Heart right ventricle (tissue), 16 donors: ENCODE measurements at regions of chr17 and their contacts with region 1.

Region 1: DNA sequence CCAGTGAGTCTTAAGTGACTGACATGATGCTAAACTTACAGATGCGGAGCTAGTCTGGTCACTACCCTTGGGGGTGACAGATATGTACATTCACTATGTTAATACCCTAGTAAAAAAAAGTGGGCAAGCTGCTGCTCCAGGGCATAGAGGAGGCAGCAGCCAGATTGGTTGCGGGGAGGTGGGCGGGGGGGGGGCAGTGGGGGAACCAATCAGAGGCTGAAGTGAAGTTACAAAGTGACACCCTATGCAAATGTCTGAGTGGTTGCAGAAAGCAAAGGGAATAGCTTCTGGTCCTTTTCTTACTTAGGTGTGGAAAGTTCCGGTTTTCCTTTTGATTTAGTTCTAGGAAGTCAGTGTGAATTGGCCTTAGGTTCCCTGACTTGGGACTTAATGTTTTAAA is 12.1 kb downstream of the NDEL1 start:
- DNase-seq: no peak
- ATAC-seq: peak in 6 of 8 donors; percentile 19 to 54 (median 44)
- H3K4me3 ChIP-seq: no peak overlapping the region
- H3K27ac ChIP-seq: peak overlapping the region in 5 of 10 donors; percentile 1 to 59 (median 8)
- H3K4me1 ChIP-seq: peaks cover 0 to 58% (median 43%) of the 10 kb centered on the region in 9 donors
- H3K27me3 ChIP-seq: no peaks in the 10 kb centered on the region
- CTCF ChIP-seq: no peak

Region 2: DNA sequence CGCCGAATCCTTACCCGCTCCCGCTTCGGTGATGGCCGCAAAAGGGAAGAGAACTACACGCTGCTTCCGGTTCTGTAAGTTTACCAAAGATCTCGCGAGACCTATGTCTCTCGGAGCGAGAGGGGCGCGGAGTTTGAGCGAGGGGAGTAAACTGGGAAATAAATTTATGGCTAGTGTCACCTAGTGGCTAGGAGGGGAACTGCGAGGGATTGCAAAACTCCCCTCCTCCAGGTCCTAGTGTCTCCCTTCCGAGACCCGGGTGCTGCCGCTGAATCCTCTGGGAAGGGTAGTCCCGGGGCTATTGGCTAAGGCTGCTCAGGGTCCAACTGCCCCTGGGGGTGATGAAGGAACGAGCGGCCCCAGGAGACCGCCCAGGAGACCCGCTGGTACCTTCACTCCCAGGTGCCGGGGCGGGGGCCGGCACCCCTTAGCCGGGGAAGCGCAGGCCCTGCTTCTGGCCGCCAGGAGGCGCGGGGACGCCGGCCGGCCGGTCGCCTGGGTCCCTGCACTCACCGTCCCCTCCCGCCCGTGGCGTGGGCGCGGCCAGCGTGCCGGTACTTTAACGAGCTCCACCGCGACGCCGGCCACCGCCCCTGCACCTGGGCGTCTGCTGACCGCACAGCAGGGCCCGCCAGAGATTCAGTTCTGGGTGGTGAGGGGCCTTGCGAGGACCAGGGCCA is 64.5 kb before region 1 on chr17 and contains the start of gene RPL26:
- intact Hi-C with region 1: loop called in 1 of 10 experiments (anchors 10 kb)
- DNase-seq: peak; percentile 92 to 98
- ATAC-seq: peak; percentile 91 to 97 (median 94)
- H3K4me3 ChIP-seq: peak within 1 kb of the TSS; percentile 64 to 87 (median 77)
- H3K27ac ChIP-seq: peak within 1 kb of the TSS; percentile 46 to 90 (median 86)
- H3K4me1 ChIP-seq: peaks cover 6 to 47% (median 31%) of the 10 kb centered on the region in 9 donors
- H3K27me3 ChIP-seq: no peaks in the 10 kb centered on the region
- CTCF ChIP-seq: peak; percentile 95 to 100 (median 99)
- total RNA-seq, gene RPL26: 1,004 to 1,398 (median 1,028) TPM

Region 3: DNA sequence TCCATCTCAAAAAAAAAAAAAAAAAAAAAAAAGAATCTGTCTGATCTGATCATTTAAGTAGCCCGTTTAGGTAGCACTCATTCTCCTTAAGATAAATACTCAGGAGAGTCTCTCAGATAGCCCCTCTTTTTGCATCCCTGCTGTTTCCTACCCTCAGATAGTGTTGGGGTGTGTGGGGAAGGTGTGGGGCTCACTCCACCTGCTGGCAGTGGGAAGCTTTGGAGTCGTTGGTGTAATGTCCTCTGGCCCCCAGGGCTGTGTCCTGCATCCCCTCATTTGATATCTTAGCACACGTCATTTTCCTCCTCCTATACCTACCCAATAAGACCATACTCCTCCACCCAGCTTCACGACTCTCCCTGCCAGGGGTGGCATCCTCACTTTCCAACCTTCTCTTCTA is 203.2 kb after region 1 on chr17:
- intact Hi-C with region 1: no loop called
- DNase-seq: no peak
- ATAC-seq: no peak
- H3K4me3 ChIP-seq: no peak overlapping the region
- H3K27ac ChIP-seq: no peak overlapping the region
- H3K4me1 ChIP-seq: peaks cover 0 to 12% (median 0%) of the 10 kb centered on the region in 9 donors
- H3K27me3 ChIP-seq: no peaks in the 10 kb centered on the region
- CTCF ChIP-seq: peak in 3 of 9 donors; percentile 15 to 34 (median 27)